Activated T-helper 1 cell treated with anti-CD3 and anti-CD28 coated beads, Interleukin-12 subunit alpha, Interleukin-12 subunit beta, Interleukin-2, Interleukin-4 antibody, amounts not matched to agents 30 ng/mL and 10 ng/mL and 1 ng/mL, durations not matched to agents 14 hours and 24 hours and 36 hours (primary cell): ENCODE measurements at regions of chr1 and their contacts with region 1.

Region 1: DNA sequence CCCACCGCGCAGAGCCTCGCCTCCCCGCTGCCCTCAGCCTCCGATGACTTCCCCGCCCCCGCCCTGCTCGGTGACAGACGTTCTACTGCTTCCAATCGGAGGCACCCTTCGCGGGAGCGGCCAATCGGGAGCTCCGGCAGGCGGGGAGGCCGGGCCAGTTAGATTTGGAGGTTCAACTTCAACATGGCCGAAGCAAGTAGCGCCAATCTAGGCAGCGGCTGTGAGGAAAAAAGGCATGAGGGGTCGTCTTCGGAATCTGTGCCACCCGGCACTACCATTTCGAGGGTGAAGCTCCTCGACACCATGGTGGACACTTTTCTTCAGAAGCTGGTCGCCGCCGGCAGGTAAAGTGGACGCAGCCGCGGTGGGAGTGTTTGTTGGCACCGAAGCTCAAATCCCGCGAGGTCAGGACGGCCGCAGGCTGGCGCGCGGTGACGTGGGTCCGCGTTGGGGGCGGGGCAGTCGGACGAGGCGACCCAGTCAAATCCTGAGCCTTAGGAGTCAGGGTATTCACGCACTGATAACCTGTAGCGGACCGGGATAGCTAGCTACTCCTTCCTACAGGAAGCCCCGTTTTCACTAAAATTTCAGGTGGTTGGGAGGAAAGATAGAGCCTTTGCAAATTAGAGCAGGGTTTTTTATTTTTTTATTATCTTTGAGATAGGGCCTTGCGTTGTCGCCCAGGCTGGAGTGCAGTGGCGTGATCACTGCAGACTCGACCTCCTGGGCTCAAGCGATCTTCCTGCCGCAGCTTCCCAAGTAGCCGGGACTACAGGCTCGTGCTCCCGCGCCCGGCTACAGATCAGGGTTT is at the start of gene PMF1:
- DNase-seq: peak; percentile 93
- H3K4me3 Mint-ChIP-seq: peak within 1 kb of the TSS; percentile 92
- H3K27ac Mint-ChIP-seq: peak within 1 kb of the TSS; percentile 97
- H3K4me1 Mint-ChIP-seq: peaks cover 53% of the 10 kb centered on the region
- H3K27me3 Mint-ChIP-seq: no peaks in the 10 kb centered on the region
- total RNA-seq, gene PMF1: 105 and 111 TPM in 2 replicates

Region 2: GRCh38 chr1:156096640-156097391 is 116.2 kb before region 1 on chr1:
- intact Hi-C with region 1: loop called (anchors 1 kb)
- DNase-seq: peak; percentile 82
- H3K4me3 Mint-ChIP-seq: peak overlapping the region; percentile 23
- H3K27ac Mint-ChIP-seq: peak overlapping the region; percentile 88
- H3K4me1 Mint-ChIP-seq: peaks cover 43% of the 10 kb centered on the region
- H3K27me3 Mint-ChIP-seq: peaks cover 25% of the 10 kb centered on the region

Region 3: DNA sequence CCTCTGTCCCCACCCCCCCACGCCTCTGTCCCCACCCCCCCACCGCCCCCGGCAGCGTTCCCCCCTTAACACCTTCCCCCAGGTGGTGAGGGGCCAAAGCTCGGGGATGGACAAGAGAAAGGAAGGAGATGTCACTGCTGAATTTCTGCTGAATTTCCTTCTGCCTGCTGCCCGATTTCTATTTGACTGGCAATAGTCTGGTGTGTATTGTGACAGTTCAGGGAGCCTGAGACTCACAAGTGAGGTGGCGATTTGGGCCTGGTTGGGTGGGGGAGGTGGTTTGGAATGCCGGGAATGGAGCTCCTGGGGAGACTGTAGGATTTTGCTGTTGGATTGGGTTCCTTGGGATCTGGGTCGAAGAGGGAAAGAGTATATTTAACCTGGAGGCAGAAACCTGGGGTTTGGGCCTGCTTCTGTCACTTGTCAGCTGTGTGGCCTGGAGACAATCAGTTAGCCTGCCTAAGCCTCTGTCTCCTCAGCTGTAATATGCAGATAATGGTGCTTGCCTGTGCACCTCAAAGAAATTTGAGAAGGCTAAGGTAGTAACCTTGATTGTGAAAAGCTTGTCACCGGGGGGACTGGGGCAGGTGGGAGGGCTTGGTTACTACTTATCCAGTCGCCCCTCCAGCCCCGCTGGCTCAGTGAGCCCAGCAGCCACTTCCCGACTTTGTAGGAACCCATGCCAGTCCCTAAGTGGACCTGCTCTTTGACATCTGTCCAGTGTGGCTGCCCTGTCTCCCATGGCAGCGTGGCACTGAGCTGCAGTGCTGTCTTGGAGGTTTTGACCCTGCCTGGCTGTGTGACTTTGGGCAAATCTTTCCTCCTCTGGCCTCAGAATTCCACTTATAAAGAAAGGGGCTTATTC is 106.2 kb before region 1 on chr1:
- intact Hi-C with region 1: loop called (anchors 1 kb)
- DNase-seq: no peak
- H3K4me3 Mint-ChIP-seq: peak overlapping the region; percentile 75
- H3K27ac Mint-ChIP-seq: peak overlapping the region; percentile 100
- H3K4me1 Mint-ChIP-seq: peaks cover 42% of the 10 kb centered on the region
- H3K27me3 Mint-ChIP-seq: peaks cover 23% of the 10 kb centered on the region

Region 4: GRCh38 chr1:156198831-156199349 is 14.1 kb before region 1 on chr1:
- intact Hi-C with region 1: loop called (anchors 1 kb)
- DNase-seq: no peak
- H3K4me3 Mint-ChIP-seq: peak overlapping the region; percentile 78
- H3K27ac Mint-ChIP-seq: peak overlapping the region; percentile 94
- H3K4me1 Mint-ChIP-seq: peaks cover 60% of the 10 kb centered on the region
- H3K27me3 Mint-ChIP-seq: no peaks in the 10 kb centered on the region

Region 5: GRCh38 chr1:156247460-156248322 is 34.7 kb after region 1 on chr1 and contains the start of gene PAQR6:
- intact Hi-C with region 1: no loop called
- DNase-seq: no peak
- H3K4me3 Mint-ChIP-seq: no peak within 1 kb of the TSS
- H3K27ac Mint-ChIP-seq: peak within 1 kb of the TSS; percentile 44
- H3K4me1 Mint-ChIP-seq: peaks cover 16% of the 10 kb centered on the region
- H3K27me3 Mint-ChIP-seq: no peaks in the 10 kb centered on the region
- total RNA-seq, gene PAQR6: 5.0 and 5.2 TPM in 2 replicates

Region 6: DNA sequence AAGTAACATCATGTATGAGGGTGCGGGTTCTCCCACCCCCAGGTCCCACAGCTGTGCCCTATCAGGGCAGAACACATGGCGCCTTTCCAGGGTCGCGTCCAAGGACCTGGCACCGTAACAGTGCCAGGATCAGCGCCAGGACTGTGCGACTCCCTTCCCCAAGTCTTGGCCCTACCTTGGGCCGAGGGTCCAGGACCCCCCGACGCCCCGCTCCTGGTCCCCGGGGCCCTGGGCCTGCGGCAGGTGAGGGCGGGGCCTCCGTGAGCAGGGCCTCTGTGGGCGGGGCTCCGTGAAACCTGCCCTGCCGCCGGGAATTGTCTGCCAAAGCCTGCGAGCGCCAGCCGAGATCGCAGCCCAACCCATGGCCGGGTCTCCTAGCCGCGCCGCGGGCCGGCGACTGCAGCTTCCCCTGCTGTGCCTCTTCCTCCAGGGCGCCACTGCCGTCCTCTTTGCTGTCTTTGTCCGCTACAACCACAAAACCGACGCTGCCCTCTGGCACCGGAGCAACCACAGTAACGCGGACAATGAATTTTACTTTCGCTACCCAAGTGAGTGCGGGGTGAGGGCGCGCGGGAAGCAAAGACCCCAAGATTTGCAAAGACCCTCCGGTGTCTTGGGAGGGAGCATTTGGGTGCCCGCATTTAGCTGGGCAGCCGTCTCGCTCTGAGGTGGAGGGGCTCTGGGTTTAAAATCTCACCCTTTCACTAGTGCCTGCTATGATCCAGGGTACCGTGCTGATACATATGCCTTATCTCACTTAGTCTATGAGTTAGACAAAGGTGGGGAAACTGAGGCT is 156.0 kb after region 1 on chr1 and contains the start of gene RHBG:
- intact Hi-C with region 1: no loop called
- DNase-seq: no peak
- H3K4me3 Mint-ChIP-seq: no peak within 1 kb of the TSS
- H3K27ac Mint-ChIP-seq: no peak within 1 kb of the TSS
- H3K4me1 Mint-ChIP-seq: no peaks in the 10 kb centered on the region
- H3K27me3 Mint-ChIP-seq: peaks cover 56% of the 10 kb centered on the region
- total RNA-seq, gene RHBG: not detected in 2 replicates

Region 7: DNA sequence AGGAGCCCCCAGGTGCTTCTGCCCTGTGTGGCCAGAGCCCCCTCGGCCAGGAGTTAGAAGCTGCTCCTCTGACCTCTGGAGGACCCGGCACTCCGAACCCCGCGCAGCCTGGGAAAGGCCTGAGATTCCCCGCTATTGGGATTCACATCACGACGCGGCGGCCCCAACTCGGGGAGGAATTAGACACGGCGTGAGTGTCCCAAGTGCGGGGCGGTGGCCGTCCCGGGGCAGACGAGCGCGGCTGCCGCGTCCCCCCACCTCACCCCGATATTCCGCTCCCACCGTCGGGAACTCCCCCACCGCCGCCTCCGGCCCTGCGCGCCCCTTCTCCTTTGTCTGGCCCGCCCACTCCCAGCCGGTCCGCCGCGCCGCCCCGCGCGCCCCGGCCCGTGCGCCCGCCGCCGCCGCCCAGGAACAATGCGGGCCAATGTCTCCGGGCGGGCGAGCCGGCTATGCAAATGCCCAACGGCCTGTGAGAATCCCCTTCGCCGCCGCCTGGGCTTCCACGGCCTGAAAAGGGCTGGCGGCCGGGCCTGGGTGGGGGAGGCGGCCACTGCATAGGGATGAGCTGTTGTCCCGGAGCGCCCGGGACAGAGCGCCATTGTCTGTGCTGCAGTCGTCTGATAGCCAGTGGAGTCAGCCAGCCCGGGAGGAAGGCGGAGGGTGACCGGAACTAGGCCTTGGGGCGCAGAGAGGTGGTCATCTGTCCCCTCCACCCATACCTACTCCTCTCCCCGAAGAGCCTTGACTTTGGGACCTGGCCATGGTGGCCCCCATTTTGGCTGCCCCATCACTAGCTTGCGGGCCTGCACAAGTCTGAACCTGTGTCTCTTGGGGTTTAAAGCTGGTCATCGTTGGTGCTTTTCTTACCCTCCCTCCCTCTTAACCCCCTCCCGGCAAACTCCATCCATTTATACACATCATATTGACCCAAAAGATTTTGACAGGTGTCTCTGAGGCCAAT is 175.4 kb after region 1 on chr1:
- intact Hi-C with region 1: no loop called
- DNase-seq: no peak
- H3K4me3 Mint-ChIP-seq: no peak overlapping the region
- H3K27ac Mint-ChIP-seq: no peak overlapping the region
- H3K4me1 Mint-ChIP-seq: peaks cover 5% of the 10 kb centered on the region
- H3K27me3 Mint-ChIP-seq: peaks cover 38% of the 10 kb centered on the region